Activated T-helper 2 cell treated with anti-CD3 and anti-CD28 coated beads, Interferon-gamma antibody, Interleukin-2, Interleukin-4, amounts not matched to agents 10 μg/mL and 5 μg/mL and 100 μg/mL, durations not matched to agents 14 hours and 24 hours and 36 hours (primary cell): ENCODE measurements at regions of chr20 and their contacts with region 1.

Region 1: DNA sequence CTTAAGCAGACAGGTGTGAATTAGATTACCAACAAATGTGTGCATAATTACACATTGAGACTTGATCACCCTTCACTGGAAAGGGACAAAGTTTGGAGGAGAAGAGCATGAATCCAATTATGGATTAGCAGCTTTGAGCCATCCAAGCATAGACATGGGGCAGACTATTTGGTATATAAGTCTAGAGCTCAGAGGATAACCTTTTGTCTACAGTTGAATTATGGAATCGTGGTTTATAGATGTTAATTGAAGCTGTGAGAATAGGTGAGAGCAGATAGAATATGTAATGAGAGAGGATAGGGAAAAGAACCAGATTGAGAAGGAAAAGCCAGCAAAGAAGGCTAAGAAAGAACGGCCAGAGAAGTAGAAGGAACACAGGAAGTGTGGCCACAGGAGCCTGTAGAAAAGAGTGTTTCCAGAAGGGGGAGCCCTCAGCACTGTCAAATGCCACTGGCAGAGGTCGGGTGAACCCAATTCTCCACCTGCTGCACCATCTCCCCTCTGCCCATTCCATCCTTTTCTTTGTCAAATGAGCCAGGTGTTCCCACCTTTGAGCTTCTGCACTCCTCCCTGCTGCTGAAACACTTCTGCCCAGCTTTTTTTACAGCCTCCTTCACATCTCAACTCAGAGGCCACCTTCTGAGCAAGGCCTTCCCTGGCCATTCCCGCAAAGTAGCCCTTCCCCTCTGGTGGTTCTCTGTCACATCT is 7.3 kb downstream of the DNTTIP1 start:
- DNase-seq: peak; percentile 49
- H3K4me3 Mint-ChIP-seq: no peak overlapping the region
- H3K27ac Mint-ChIP-seq: peak overlapping the region; percentile 74
- H3K4me1 Mint-ChIP-seq: peaks cover 11% of the 10 kb centered on the region
- H3K27me3 Mint-ChIP-seq: no peaks in the 10 kb centered on the region

Region 2: GRCh38 chr20:45880988-45881788 is 82.1 kb after region 1 on chr20 and contains the start of gene ZSWIM1:
- intact Hi-C with region 1: loop called (anchors 10 kb)
- DNase-seq: peak; percentile 98
- H3K4me3 Mint-ChIP-seq: peak within 1 kb of the TSS; percentile 95
- H3K27ac Mint-ChIP-seq: peak within 1 kb of the TSS; percentile 81
- H3K4me1 Mint-ChIP-seq: peaks cover 31% of the 10 kb centered on the region
- H3K27me3 Mint-ChIP-seq: no peaks in the 10 kb centered on the region
- total RNA-seq, gene ZSWIM1: 9.3 and 10.3 TPM in 2 replicates

Region 3: DNA sequence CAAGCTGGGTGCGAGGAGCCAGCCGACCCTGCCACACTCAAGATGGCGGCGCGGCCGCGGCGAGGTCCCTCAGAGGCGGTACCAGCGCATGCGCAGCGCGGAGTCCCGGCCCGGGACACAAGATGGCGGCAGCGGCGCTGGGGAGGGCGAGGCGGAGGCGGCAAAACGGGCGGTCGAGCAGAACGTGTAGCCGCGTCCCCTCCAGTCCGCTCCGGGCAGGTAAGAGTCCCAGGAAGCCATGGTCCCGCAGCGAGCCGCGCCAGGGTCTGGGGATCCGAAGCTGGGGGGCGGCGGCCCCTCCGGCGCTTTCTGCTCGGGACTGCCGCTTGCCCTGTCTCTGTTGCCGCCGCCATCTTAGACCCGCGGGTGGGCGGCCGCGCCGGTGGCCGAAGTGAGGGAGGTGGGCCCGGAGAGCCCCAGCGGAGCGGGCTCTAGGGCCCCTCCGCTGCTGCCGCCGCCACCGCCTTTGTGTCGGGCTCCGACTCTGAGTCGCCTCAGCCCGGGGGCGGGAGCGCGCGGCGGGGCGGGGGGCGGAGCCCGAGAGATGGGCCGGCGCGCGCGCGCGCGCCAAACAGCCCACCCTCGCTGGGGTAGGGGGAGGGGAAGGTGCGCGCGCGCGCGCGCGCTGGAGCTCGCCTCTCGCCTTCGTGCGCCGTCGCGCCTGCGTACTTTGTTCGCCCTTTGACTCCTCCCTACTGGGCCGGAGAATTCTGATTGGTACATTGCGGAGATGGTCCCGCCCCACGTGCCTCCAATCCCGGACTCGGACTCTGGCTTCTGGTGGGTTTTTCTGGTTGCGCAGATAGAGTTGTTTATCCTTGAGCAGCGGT is 135.7 kb after region 1 on chr20 and contains the start of gene PCIF1:
- intact Hi-C with region 1: no loop called
- DNase-seq: peak; percentile 97
- H3K4me3 Mint-ChIP-seq: peak within 1 kb of the TSS; percentile 92
- H3K27ac Mint-ChIP-seq: peak within 1 kb of the TSS; percentile 94
- H3K4me1 Mint-ChIP-seq: peaks cover 25% of the 10 kb centered on the region
- H3K27me3 Mint-ChIP-seq: no peaks in the 10 kb centered on the region
- total RNA-seq, gene PCIF1: 27.5 and 28.6 TPM in 2 replicates

Region 4: GRCh38 chr20:45963059-45964005 is 164.2 kb after region 1 on chr20:
- intact Hi-C with region 1: loop called (anchors 5 kb)
- DNase-seq: no peak
- H3K4me3 Mint-ChIP-seq: no peak overlapping the region
- H3K27ac Mint-ChIP-seq: no peak overlapping the region
- H3K4me1 Mint-ChIP-seq: no peaks in the 10 kb centered on the region
- H3K27me3 Mint-ChIP-seq: no peaks in the 10 kb centered on the region